CD8-positive, alpha-beta T cell (primary cell): ENCODE measurements at regions of chr1 and their contacts with region 1.

Region 1: DNA sequence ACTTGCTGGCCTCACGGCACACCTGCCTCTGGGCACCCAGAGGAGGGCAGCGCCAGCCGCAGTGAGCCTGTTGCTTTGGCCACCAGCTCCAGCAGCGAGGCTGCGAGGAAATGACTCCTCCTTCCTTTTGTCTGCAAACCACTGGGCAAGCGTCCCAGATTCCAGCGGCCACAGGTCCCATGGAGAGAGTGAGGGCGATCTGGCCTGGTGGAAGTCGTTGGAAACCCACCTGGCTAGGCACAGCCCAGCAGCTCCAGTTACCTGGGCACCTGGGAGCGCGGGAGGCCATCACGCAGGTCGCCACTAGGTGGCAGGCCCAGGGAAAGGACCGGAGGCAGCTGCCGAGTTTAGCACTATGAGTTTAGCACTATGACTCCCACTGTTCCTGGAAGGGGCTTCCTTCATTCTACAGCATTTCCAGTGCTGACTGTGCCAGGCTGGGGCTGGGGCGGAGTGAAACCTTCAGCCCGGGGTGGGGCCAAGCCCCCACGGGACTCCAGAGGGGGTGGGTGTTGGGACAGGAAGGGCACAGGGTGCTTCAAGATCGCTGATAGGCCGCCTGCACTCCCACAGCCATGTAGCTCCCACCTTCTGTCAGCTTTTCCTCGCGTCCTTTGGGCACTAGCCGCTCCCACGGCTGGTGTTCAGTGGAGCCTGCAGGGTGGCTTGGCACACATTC is 1.1 kb upstream of the ESPN start:
- DNase-seq: peak; percentile 49 to 83 (median 75)
- ATAC-seq: peak; percentile 84
- H3K4me3 ChIP-seq: peak overlapping the region; percentile 12 to 46
- H3K4me3 Mint-ChIP-seq: peak overlapping the region; percentile 72
- H3K27ac ChIP-seq: no peak overlapping the region
- H3K27ac Mint-ChIP-seq: no peak overlapping the region
- H3K4me1 ChIP-seq: peaks cover 33% of the 10 kb centered on the region
- H3K4me1 Mint-ChIP-seq: peaks cover 9% of the 10 kb centered on the region
- H3K27me3 ChIP-seq: peaks cover 26 to 53% of the 10 kb centered on the region in 2 experiments
- H3K27me3 Mint-ChIP-seq: peaks cover 37% of the 10 kb centered on the region
- CTCF ChIP-seq: peak; percentile 72

Region 2: DNA sequence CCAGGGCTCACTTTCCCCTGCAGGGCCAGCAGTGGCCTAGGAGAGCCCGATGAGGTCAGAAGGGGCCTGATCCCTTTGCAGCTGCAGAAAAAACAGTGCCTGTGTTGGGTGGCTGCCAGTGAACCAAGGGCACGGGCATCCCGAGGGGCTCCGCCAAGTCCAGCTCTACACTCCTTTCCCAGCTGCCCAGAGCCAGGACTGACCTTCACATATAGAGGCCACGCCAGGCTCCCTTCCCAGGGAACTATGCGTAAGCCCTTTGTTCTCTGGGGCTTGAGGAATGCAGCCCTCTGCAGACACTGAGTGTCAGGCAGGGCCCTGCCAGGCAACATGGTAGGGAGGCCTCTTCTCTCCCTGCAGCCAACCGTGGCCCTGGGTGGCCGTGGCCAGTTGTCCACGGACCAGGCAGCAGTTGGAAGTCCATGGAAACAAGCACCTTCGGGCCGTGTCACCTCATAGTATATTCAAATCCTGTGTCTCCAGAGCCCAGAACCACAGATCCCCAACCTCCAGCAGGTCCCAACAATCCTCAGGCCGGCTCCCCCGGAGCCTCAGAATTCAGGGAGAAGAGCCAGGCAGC is 625.2 kb before region 1 on chr1:
- CTCF ChIA-PET with region 1: no interaction called
- POLR2A ChIA-PET with region 1: no interaction called
- intact Hi-C with region 1: no loop called
- DNase-seq: no peak
- ATAC-seq: no peak
- H3K4me3 ChIP-seq: no peak overlapping the region
- H3K4me3 Mint-ChIP-seq: no peak overlapping the region
- H3K27ac ChIP-seq: no peak overlapping the region
- H3K27ac Mint-ChIP-seq: no peak overlapping the region
- H3K4me1 ChIP-seq: no peaks in the 10 kb centered on the region
- H3K4me1 Mint-ChIP-seq: no peaks in the 10 kb centered on the region
- H3K27me3 ChIP-seq: peaks cover 0 to 2% of the 10 kb centered on the region in 2 experiments
- H3K27me3 Mint-ChIP-seq: peaks cover 6% of the 10 kb centered on the region
- CTCF ChIP-seq: no peak

Region 3: GRCh38 chr1:6343506-6344405 is 79.7 kb before region 1 on chr1:
- CTCF ChIA-PET with region 1: interaction called, 10 read pairs
- POLR2A ChIA-PET with region 1: no interaction called
- intact Hi-C with region 1: no loop called
- DNase-seq: peak; percentile 22 to 73 (median 61)
- ATAC-seq: peak; percentile 63
- H3K4me3 ChIP-seq: no peak overlapping the region
- H3K4me3 Mint-ChIP-seq: no peak overlapping the region
- H3K27ac ChIP-seq: no peak overlapping the region
- H3K27ac Mint-ChIP-seq: no peak overlapping the region
- H3K4me1 ChIP-seq: peaks cover 13% of the 10 kb centered on the region
- H3K4me1 Mint-ChIP-seq: peaks cover 10% of the 10 kb centered on the region
- H3K27me3 ChIP-seq: no peaks in the 10 kb centered on the region
- H3K27me3 Mint-ChIP-seq: no peaks in the 10 kb centered on the region
- CTCF ChIP-seq: peak; percentile 52

Region 4: GRCh38 chr1:6438047-6438525 is 14.6 kb after region 1 on chr1:
- CTCF ChIA-PET with region 1: interaction called, 45 read pairs
- POLR2A ChIA-PET with region 1: interaction called, 3 read pairs
- intact Hi-C with region 1: loop called (anchors 1 kb)
- DNase-seq: peak; percentile 54 to 82 (median 72)
- ATAC-seq: peak; percentile 75
- H3K4me3 ChIP-seq: no peak overlapping the region
- H3K4me3 Mint-ChIP-seq: no peak overlapping the region
- H3K27ac ChIP-seq: no peak overlapping the region
- H3K27ac Mint-ChIP-seq: no peak overlapping the region
- H3K4me1 ChIP-seq: peaks cover 6% of the 10 kb centered on the region
- H3K4me1 Mint-ChIP-seq: peaks cover 12% of the 10 kb centered on the region
- H3K27me3 ChIP-seq: peaks cover 0 to 8% of the 10 kb centered on the region in 2 experiments
- H3K27me3 Mint-ChIP-seq: peaks cover 26% of the 10 kb centered on the region
- CTCF ChIP-seq: peak; percentile 92

Region 5: DNA sequence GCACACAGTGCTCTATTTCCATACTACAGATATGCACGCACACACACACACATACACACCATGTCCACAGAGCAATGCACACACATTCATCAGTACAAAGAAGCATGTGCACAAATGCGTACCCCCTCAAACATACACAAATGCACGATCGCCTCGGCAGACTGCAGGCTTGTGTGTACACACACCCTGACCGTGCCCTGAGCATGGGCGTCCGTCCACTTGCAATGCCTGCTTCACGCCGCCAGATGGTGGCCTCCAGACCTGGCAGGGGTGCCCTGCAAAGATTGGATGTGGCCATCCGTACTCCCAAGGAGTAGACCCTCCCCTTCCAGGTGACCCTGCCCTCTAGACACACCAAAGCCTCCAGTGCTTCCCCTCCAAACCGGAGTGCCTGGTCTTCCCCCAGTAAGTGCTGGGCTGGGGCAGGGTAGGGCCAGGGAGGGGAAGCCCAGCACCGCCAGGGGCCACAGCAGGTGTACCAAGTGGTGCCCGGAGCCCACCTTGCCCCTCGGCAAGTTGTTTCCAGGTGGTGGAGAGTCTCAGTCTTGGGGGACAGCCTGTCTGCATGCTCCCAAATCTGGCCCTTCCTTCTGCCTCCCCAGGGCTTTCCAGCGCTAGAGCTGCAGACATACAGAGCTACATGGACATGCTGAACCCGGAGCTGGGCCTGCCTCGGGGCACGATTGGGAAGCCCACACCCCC is 21.8 kb after region 1 on chr1:
- CTCF ChIA-PET with region 1: interaction called, 10 read pairs
- POLR2A ChIA-PET with region 1: no interaction called
- intact Hi-C with region 1: no loop called
- DNase-seq: peak in 5 of 9 experiments; percentile 46 to 56 (median 50)
- ATAC-seq: no peak
- H3K4me3 ChIP-seq: no peak overlapping the region
- H3K4me3 Mint-ChIP-seq: no peak overlapping the region
- H3K27ac ChIP-seq: no peak overlapping the region
- H3K27ac Mint-ChIP-seq: no peak overlapping the region
- H3K4me1 ChIP-seq: peaks cover 26% of the 10 kb centered on the region
- H3K4me1 Mint-ChIP-seq: peaks cover 27% of the 10 kb centered on the region
- H3K27me3 ChIP-seq: peaks cover 24 to 30% of the 10 kb centered on the region in 2 experiments
- H3K27me3 Mint-ChIP-seq: peaks cover 37% of the 10 kb centered on the region
- CTCF ChIP-seq: peak; percentile 23

Region 6: DNA sequence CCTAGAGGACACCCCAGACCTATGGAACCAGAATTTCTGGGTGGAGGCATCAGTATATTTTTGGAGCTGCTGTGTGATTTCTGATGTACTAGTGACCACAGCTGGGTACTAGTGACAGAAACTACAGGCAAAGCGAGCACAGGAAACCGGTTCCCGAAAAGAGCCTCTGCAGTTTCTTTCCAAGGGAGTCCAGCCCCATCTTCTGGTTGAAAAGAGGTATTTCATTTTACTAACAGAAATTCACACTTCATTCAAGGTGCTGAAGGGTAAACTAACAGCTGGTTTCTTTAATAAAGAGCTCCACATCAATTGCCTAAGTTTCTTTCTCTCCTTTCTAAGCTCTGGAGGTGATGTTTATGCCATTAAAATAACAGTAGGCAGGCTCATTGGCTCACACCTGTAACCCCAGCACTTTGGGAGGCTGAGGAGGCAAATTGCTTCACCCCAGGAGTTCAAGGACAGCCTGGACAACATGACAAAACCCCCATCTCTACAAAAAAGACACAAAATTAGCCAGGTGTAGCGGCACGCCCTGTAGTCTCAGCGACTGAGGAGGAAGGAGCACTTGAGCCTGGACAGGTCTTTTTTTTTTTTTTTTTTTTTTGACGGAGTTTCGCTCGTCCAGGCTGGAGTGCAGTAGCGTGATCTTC is 223.2 kb after region 1 on chr1:
- CTCF ChIA-PET with region 1: interaction called, 3 read pairs
- POLR2A ChIA-PET with region 1: no interaction called
- intact Hi-C with region 1: loop called in 1 of 2 experiments (anchors 1 kb)
- DNase-seq: peak in 6 of 9 experiments; percentile 8 to 69 (median 30)
- ATAC-seq: peak; percentile 74
- H3K4me3 ChIP-seq: no peak overlapping the region
- H3K4me3 Mint-ChIP-seq: no peak overlapping the region
- H3K27ac ChIP-seq: no peak overlapping the region
- H3K27ac Mint-ChIP-seq: no peak overlapping the region
- H3K4me1 ChIP-seq: no peaks in the 10 kb centered on the region
- H3K4me1 Mint-ChIP-seq: peaks cover 3% of the 10 kb centered on the region
- H3K27me3 ChIP-seq: no peaks in the 10 kb centered on the region
- H3K27me3 Mint-ChIP-seq: no peaks in the 10 kb centered on the region
- CTCF ChIP-seq: peak; percentile 64